Lower leg skin (tissue), 4 donors: ENCODE measurements at regions of chr1 and their contacts with region 1.

Region 1: GRCh38 chr1:114986286-114986685 is 43.3 kb upstream of the TSHB start:
- DNase-seq: no peak
- H3K4me3 ChIP-seq: no peak overlapping the region
- CTCF ChIP-seq: no peak
- POLR2A ChIP-seq: no peak

Region 2: GRCh38 chr1:114695430-114696058 is 290.7 kb before region 1 on chr1 and contains the start of gene AMPD1:
- intact Hi-C with region 1: no loop called
- DNase-seq: no peak
- H3K4me3 ChIP-seq: no peak within 1 kb of the TSS
- CTCF ChIP-seq: no peak
- POLR2A ChIP-seq: no peak
- total RNA-seq, gene AMPD1: not detected

Region 3: GRCh38 chr1:115041654-115042053 is 55.4 kb after region 1 on chr1:
- intact Hi-C with region 1: loop called (anchors 10 kb)
- DNase-seq: no peak
- H3K4me3 ChIP-seq: no peak overlapping the region
- CTCF ChIP-seq: no peak
- POLR2A ChIP-seq: no peak